CD8-positive, alpha-beta T cell (primary cell): ENCODE measurements at regions of chr1 and their contacts with region 1.

Region 1: GRCh38 chr1:37989361-37989930 is 376 bp downstream of the SF3A3 start:
- DNase-seq: peak in 5 of 9 experiments; percentile 32 to 60 (median 48)
- ATAC-seq: peak; percentile 35
- H3K4me3 ChIP-seq: peak overlapping the region; percentile 61 to 84
- H3K4me3 Mint-ChIP-seq: peak overlapping the region; percentile 99
- H3K27ac ChIP-seq: peak overlapping the region; percentile 56 to 71
- H3K27ac Mint-ChIP-seq: peak overlapping the region; percentile 95
- H3K4me1 ChIP-seq: peaks cover 15% of the 10 kb centered on the region
- H3K4me1 Mint-ChIP-seq: peaks cover 26% of the 10 kb centered on the region
- H3K27me3 ChIP-seq: no peaks in the 10 kb centered on the region
- H3K27me3 Mint-ChIP-seq: no peaks in the 10 kb centered on the region
- CTCF ChIP-seq: no peak

Region 2: GRCh38 chr1:37859507-37860345 is 129.7 kb before region 1 on chr1 and contains the start of gene MTF1:
- CTCF ChIA-PET with region 1: interaction called, 11 read pairs
- POLR2A ChIA-PET with region 1: no interaction called
- intact Hi-C with region 1: loop called (anchors 1 kb)
- DNase-seq: peak; percentile 91 to 99 (median 96)
- ATAC-seq: peak; percentile 99
- H3K4me3 ChIP-seq: peak within 1 kb of the TSS; percentile 88 to 99
- H3K4me3 Mint-ChIP-seq: peak within 1 kb of the TSS; percentile 98
- H3K27ac ChIP-seq: peak within 1 kb of the TSS; percentile 94 to 96
- H3K27ac Mint-ChIP-seq: peak within 1 kb of the TSS; percentile 94
- H3K4me1 ChIP-seq: peaks cover 19% of the 10 kb centered on the region
- H3K4me1 Mint-ChIP-seq: peaks cover 34% of the 10 kb centered on the region
- H3K27me3 ChIP-seq: no peaks in the 10 kb centered on the region
- H3K27me3 Mint-ChIP-seq: no peaks in the 10 kb centered on the region
- CTCF ChIP-seq: peak; percentile 79
- total RNA-seq, gene MTF1: 30.3 to 30.8 TPM

Region 3: DNA sequence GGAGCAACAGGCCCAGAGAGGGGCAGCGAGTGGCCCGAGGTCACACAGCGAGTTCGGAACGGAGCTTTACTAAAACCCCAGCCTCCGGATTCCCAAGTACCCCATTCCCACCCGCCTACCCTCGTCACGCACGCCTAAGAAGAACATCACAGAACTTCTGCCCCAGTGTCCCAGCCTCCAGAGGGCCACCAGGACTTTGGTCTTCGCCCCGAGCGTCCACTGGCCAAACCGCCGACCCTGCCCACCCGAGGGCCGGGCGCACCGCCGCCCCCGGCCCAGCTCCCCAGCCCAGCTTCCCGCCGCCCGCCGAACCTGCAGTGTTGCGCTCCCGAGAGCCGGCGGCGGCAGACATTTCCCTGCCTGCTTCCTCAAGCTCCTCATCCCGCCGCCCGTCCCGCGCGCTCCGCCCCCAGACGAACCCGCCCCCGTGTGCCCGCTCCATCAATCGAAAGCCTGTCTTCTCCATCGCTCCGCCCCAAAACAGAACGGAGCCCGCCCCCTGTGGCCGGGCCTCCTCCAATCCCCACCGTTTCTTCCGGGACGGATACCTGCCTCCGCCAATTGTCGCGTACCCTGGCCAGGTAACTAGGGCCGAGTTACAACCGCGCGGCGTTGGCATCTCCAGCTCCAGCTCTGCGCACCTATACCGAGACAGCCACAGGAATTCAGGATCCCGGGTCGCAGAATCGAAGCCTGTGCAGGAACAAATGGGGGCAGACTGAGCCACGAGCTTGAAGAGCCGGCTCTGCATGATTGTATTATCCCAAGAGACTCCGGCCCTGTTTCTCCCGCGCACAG is 57.9 kb before region 1 on chr1:
- CTCF ChIA-PET with region 1: interaction called, 5 read pairs
- POLR2A ChIA-PET with region 1: interaction called, 3 read pairs
- intact Hi-C with region 1: loop called (anchors 1 kb)
- DNase-seq: peak; percentile 96 to 98 (median 97)
- ATAC-seq: peak; percentile 98
- H3K4me3 ChIP-seq: peak overlapping the region; percentile 79 to 89
- H3K4me3 Mint-ChIP-seq: peak overlapping the region; percentile 100
- H3K27ac ChIP-seq: peak overlapping the region; percentile 40 to 66
- H3K27ac Mint-ChIP-seq: peak overlapping the region; percentile 89
- H3K4me1 ChIP-seq: peaks cover 26% of the 10 kb centered on the region
- H3K4me1 Mint-ChIP-seq: peaks cover 40% of the 10 kb centered on the region
- H3K27me3 ChIP-seq: no peaks in the 10 kb centered on the region
- H3K27me3 Mint-ChIP-seq: no peaks in the 10 kb centered on the region
- CTCF ChIP-seq: no peak

Region 4: GRCh38 chr1:38004284-38005108 is 15.1 kb after region 1 on chr1:
- CTCF ChIA-PET with region 1: interaction called, 32 read pairs
- POLR2A ChIA-PET with region 1: interaction called, 13 read pairs
- intact Hi-C with region 1: loop called in 1 of 2 experiments (anchors 1 kb)
- DNase-seq: peak in 4 of 9 experiments; percentile 36 to 58 (median 46)
- ATAC-seq: peak; percentile 24
- H3K4me3 ChIP-seq: peak overlapping the region; percentile 47 to 54
- H3K4me3 Mint-ChIP-seq: peak overlapping the region; percentile 83
- H3K27ac ChIP-seq: peak overlapping the region in 1 of 2 experiments; percentile 46
- H3K27ac Mint-ChIP-seq: peak overlapping the region; percentile 79
- H3K4me1 ChIP-seq: peaks cover 35% of the 10 kb centered on the region
- H3K4me1 Mint-ChIP-seq: peaks cover 54% of the 10 kb centered on the region
- H3K27me3 ChIP-seq: no peaks in the 10 kb centered on the region
- H3K27me3 Mint-ChIP-seq: no peaks in the 10 kb centered on the region
- CTCF ChIP-seq: no peak

Region 5: GRCh38 chr1:38018864-38019343 is 29.5 kb after region 1 on chr1:
- CTCF ChIA-PET with region 1: interaction called, 69 read pairs
- POLR2A ChIA-PET with region 1: interaction called, 7 read pairs
- intact Hi-C with region 1: loop called (anchors 1 kb)
- DNase-seq: peak in 2 of 9 experiments; percentile 53 to 59
- ATAC-seq: peak; percentile 79
- H3K4me3 ChIP-seq: no peak overlapping the region
- H3K4me3 Mint-ChIP-seq: no peak overlapping the region
- H3K27ac ChIP-seq: no peak overlapping the region
- H3K27ac Mint-ChIP-seq: no peak overlapping the region
- H3K4me1 ChIP-seq: peaks cover 4% of the 10 kb centered on the region
- H3K4me1 Mint-ChIP-seq: peaks cover 19% of the 10 kb centered on the region
- H3K27me3 ChIP-seq: no peaks in the 10 kb centered on the region
- H3K27me3 Mint-ChIP-seq: no peaks in the 10 kb centered on the region
- CTCF ChIP-seq: peak; percentile 56